Upper lobe of right lung (tissue), 1 donor: ENCODE measurements at regions of chr6 and their contacts with region 1.

Region 1: GRCh38 chr6:43143235-43144124 is 27.6 kb upstream of the SRF start:
- DNase-seq: peak; percentile 91
- ATAC-seq: peak; percentile 98
- H3K4me3 ChIP-seq: no peak overlapping the region
- H3K27ac ChIP-seq: peak overlapping the region; percentile 45
- H3K4me1 ChIP-seq: peaks cover 10% of the 10 kb centered on the region
- H3K27me3 ChIP-seq: no peaks in the 10 kb centered on the region
- CTCF ChIP-seq: peak; percentile 95

Region 2: DNA sequence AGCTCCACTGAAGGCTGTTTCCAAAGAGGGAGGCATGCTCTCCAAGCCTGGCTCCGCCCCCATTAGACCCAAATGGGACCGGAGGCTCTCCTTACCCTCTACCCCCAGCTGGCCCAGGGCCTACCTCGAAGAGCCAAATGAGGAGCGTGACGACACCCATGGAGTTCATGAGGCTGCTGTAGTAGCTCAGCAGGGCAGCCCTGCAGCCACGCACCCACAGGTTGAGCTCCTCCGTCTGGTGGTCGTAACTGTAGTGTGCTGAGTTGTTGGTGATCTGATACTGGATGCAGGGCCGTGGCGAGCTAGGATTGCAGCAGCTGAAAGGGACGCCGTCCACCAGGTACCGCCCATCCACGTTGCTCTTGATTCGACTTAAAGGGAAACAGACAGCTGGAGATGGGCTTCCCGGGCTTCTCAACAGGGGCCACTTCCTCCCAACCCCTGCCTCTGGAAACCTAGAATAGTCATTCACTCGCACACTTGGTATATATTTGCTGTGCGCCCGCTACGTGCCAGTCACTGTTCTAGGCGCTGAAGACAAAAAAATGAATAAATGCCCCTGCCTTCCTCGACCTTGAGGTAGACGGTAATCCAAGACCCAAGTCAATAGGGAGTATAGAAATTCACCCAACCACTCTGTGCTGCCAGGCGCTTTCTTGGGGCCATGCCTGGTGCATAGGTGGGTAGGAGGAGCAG is 439.1 kb before region 1 on chr6:
- intact Hi-C with region 1: no loop called
- DNase-seq: no peak
- ATAC-seq: peak; percentile 33
- H3K4me3 ChIP-seq: no peak overlapping the region
- H3K27ac ChIP-seq: no peak overlapping the region
- H3K4me1 ChIP-seq: no peaks in the 10 kb centered on the region
- H3K27me3 ChIP-seq: no peaks in the 10 kb centered on the region
- CTCF ChIP-seq: no peak

Region 3: GRCh38 chr6:42901536-42901957 is 241.9 kb before region 1 on chr6:
- intact Hi-C with region 1: loop called (anchors 5 kb)
- DNase-seq: peak; percentile 80
- ATAC-seq: peak; percentile 100
- H3K4me3 ChIP-seq: peak overlapping the region; percentile 26
- H3K27ac ChIP-seq: no peak overlapping the region
- H3K4me1 ChIP-seq: peaks cover 17% of the 10 kb centered on the region
- H3K27me3 ChIP-seq: no peaks in the 10 kb centered on the region
- CTCF ChIP-seq: peak; percentile 89

Region 4: GRCh38 chr6:43070028-43070632 is 73.3 kb before region 1 on chr6:
- intact Hi-C with region 1: loop called (anchors 10 kb)
- DNase-seq: no peak
- ATAC-seq: peak; percentile 75
- H3K4me3 ChIP-seq: no peak overlapping the region
- H3K27ac ChIP-seq: no peak overlapping the region
- H3K4me1 ChIP-seq: no peaks in the 10 kb centered on the region
- H3K27me3 ChIP-seq: no peaks in the 10 kb centered on the region
- CTCF ChIP-seq: peak; percentile 48